Colonic mucosa (tissue), 4 donors: ENCODE measurements at regions of chr5 and their contacts with region 1.

Region 1: DNA sequence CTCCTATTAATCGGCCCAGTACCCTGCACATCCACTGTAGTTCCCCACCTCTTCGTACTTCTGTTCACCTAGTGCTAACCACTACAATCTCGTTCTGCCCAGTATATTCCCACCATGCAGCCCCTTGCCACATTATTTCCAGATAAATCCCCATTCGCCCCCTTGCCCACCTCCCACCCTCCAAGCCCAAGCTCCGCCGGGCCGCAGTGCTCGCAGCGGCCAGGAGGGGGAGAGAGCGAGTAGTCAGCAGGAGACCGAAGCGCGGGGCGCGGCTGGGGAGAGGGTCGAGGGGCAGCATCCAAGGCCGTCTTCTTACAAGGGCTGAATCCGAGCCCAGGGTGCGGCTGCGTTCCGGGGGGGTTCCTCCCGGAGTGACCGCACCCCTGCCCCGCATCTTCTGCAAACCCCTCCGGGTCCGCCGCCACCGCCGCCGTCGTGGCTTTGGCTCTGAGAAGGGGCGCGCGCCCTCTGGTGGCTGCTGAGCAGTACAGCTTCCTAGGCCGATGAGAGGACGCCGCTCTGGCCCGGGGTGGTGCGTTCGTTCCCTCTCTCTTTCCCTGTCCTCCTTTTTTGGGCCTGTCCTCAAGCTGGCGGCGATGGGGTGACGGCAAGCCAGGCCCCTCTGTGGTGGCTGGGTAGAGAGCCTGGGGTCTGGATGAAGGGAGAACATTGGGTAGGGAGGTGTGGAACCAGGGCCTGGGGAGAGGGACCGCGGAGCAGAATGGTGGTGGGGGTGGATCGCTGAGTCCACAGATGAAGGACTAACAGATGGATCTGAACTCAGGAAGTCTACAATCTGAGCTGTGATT is 30.0 kb upstream of the PSD2 start:
- DNase-seq: peak; percentile 79
- H3K4me3 ChIP-seq: peak overlapping the region; percentile 54
- H3K27ac ChIP-seq: no peak overlapping the region
- H3K4me1 ChIP-seq: no peaks in the 10 kb centered on the region
- H3K27me3 ChIP-seq: peaks cover 12% of the 10 kb centered on the region
- CTCF ChIP-seq: peak; percentile 99

Region 2: GRCh38 chr5:139177809-139178588 is 587.6 kb before region 1 on chr5:
- intact Hi-C with region 1: no loop called
- DNase-seq: peak; percentile 50
- H3K4me3 ChIP-seq: no peak overlapping the region
- H3K27ac ChIP-seq: peak overlapping the region; percentile 9
- H3K4me1 ChIP-seq: peaks cover 5% of the 10 kb centered on the region
- H3K27me3 ChIP-seq: no peaks in the 10 kb centered on the region
- CTCF ChIP-seq: no peak

Region 3: DNA sequence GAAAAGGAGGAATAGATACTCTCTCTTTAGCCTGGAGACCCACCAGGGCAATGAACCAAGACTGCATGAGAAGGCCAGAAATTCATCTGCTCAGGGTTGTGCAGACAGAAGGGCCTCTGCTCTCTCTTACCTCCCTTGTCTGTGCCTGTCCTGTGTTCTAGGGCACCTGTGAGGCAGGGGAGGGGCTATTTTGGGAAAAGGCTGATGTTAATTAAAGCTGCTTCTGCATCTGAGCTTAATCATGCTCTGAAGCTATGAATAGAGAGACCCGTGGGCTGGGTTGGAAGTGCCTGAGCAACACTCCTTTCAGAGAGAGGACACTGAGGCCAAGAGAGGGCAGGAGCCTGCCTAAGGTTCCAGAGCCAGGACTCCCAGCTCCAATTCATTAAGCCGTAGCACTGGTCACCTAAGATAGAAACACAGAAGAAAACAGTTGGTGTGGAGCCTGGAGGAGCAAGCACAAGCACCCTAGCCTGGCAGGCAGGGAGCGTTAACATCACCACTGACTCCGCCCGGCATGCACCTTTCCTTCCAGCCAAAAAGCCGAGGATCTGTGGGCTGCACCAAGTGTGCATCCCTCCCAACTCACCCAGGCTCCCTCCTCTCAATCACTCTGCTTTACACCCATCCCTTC is 251.6 kb before region 1 on chr5:
- intact Hi-C with region 1: no loop called
- DNase-seq: no peak
- H3K4me3 ChIP-seq: no peak overlapping the region
- H3K27ac ChIP-seq: no peak overlapping the region
- H3K4me1 ChIP-seq: no peaks in the 10 kb centered on the region
- H3K27me3 ChIP-seq: no peaks in the 10 kb centered on the region
- CTCF ChIP-seq: peak; percentile 13

Region 4: DNA sequence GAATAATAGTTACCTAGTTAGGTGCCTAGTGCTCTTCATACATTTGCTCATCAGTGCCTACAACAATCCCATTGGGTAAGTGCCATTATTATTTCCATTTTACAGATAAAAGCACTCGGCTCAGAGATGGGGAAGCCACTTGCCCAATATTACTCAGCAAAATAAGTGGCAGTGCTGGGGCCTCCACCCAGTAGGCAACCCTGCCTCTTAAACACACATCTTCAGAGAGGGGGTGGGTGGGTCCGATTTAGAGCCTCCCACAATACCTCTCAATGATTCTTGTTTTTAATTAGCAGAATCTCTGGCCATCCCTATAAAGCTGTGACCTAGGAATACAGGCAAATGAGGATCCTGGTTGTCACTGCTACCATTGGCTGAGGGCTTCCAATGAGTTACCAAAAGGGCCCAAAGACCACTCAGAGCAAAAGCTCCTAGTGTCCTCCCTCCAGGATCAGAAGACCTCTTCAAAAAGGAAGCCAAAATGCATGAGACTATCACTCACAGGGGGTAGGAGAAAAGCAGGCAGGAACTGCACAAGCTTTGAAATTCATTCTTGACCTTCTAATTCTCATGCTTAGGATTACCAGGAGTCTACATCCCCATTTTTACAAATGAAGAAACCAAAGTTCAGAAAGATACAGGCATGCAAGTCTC is 240.6 kb before region 1 on chr5:
- intact Hi-C with region 1: loop called (anchors 10 kb)
- DNase-seq: no peak
- H3K4me3 ChIP-seq: no peak overlapping the region
- H3K27ac ChIP-seq: peak overlapping the region; percentile 79
- H3K4me1 ChIP-seq: peaks cover 3% of the 10 kb centered on the region
- H3K27me3 ChIP-seq: no peaks in the 10 kb centered on the region
- CTCF ChIP-seq: no peak

Region 5: DNA sequence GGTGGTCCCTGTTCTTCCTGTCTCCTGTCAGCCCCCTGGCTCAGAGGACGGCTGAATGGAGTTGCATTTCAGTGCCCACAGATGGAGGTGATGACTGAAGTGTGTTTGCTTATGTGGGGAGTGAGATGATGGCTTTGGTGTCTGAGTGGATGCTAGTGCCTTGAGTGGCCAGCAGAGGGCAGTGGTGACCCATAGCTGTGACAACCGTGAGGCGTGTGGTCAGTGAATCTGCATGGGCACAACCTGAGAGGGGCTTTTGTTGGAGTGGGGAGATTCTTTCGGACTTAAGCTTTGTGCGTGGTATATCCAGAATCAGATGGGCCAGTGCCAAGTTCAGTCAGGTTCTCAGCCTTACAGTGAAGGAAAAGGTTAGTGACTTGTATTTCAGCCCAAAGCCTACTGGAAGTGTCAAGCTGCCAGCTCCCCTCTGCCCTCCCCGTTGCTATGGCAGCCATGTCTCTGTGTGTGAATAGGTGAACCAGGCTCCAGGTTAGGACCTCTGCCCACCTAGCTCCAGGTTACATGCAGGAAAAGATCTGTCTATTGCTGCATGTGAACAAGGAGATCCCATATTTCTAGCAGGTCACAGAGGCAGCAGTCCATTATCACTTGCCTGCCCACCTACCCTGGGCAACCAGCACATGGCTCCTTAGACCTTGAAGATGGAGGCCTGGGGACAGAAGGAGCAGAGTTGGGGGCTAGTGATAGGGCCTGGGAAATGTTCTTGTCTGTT is 132.2 kb before region 1 on chr5:
- intact Hi-C with region 1: loop called (anchors 1 kb)
- DNase-seq: peak; percentile 73
- H3K4me3 ChIP-seq: no peak overlapping the region
- H3K27ac ChIP-seq: no peak overlapping the region
- H3K4me1 ChIP-seq: peaks cover 13% of the 10 kb centered on the region
- H3K27me3 ChIP-seq: no peaks in the 10 kb centered on the region
- CTCF ChIP-seq: peak; percentile 95

Region 6: DNA sequence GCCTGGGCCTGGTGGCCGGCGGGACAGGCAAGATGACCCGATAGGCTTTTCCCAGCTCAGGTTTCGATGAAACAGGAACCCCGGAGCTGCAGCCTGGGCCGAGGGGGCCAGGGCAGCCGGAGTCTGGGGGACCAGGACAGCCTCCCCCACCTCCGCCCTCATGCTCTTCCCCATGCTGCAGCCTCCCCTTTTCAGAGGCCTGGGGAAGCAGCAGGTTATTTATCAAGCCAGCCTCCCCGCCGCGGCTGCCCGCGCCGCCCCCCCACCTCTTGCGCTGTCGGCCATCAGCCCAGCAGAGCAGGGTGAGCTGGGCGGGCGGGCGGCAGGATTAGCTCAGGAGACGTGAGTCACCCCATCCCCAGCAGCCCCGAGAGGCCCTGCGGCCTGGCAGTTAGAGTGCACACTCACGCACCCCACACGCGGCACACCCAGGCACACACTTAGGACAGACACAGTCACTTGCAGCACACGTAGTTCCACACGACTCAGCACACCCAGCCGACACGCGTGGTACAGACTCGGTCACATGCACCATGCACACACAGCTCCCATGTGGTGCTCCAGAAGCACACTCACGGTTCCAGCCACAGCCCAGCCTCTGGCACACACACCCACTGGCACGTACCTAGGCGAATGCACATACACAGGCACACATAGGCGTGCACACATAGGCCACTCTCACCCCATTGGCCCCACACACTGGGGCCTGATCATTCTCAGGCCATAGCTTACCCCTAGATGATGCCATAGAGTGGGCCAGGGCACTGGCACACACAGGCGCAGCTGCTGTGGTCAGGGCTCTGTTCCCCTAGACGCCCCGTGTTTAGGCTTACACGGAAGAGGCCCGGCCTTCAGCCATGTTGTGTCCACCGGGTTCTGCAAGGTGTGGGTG is 104.4 kb before region 1 on chr5:
- intact Hi-C with region 1: no loop called
- DNase-seq: peak; percentile 70
- H3K4me3 ChIP-seq: no peak overlapping the region
- H3K27ac ChIP-seq: peak overlapping the region; percentile 81
- H3K4me1 ChIP-seq: peaks cover 14% of the 10 kb centered on the region
- H3K27me3 ChIP-seq: no peaks in the 10 kb centered on the region
- CTCF ChIP-seq: no peak

Region 7: GRCh38 chr5:139690064-139690802 is 75.4 kb before region 1 on chr5:
- intact Hi-C with region 1: loop called (anchors 5 kb)
- DNase-seq: peak; percentile 57
- H3K4me3 ChIP-seq: no peak overlapping the region
- H3K27ac ChIP-seq: no peak overlapping the region
- H3K4me1 ChIP-seq: peaks cover 8% of the 10 kb centered on the region
- H3K27me3 ChIP-seq: no peaks in the 10 kb centered on the region
- CTCF ChIP-seq: peak; percentile 43

Region 8: DNA sequence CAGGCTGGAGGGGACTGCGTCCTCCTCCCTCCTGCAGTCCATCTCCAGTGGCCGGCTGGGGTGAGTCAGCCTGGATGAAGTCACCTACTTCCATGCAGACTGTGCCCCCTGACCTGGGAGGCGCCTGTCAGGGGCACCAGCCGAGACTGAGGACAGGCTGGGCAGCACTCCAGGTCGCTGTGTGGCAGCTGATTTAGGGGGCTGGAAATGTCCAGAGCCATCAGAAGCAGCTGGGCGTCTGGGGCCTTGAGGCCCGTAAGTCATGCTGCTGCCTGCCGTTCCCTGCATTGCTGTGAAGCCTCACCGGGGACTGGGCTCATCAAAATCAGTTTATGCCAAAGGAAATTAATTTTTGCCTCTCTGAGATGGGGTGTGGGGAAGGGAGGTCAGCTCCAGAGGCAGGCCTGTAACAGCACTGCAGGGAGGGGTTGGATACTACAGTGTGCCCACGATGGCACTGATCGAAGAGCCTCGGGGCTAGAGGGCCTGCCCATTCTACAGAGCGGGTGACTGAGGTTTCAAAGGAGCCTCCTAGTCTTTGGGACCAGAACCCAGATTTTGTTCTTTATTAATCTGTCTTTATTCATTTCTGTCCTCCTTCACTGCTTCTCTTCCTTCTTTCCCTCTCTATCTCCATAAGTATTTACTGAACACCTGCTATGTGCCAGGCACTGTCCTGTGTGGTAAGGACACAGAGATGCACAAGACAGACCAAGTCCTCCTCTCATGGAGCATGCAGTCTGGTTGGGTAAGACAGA is 40.4 kb before region 1 on chr5:
- intact Hi-C with region 1: no loop called
- DNase-seq: peak; percentile 40
- H3K4me3 ChIP-seq: no peak overlapping the region
- H3K27ac ChIP-seq: no peak overlapping the region
- H3K4me1 ChIP-seq: no peaks in the 10 kb centered on the region
- H3K27me3 ChIP-seq: no peaks in the 10 kb centered on the region
- CTCF ChIP-seq: no peak